ENCODE measurements at regions of chr18 and their contacts with region 1.

Region 1: DNA sequence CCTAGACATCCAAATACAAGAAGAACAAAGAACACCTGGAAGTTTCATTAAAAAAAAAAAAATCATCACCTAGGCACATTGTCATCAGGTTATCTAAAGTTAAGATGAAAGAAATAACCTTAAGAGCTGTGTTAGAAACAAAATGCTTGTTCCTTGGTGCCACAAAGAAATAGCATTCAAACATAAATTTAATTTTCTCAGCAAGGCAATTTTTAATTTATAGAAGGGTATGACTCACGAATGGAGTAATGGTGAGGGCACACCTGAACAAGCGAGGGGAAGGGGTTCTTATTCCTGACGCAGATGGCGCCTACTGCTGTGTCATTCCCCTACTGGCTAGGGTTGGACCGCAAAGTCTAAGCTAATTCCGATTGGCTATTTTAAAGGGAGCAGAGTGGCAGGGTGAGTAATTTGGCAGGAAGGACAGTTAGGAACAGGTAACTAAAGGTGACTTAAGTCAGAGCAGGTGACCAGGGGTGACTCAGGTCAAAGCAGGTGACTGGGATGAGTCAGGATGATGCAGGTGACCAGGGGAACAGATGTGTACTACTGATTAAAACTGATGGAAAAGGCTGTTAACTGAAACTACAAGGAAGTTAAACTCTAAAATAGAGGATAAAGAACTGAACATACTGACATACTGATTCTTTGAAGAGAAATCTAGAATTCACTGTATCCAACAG is 30.0 kb upstream of the TWSG1 start:
- DNase-seq: no peak
- H3K4me3 ChIP-seq: no peak overlapping the region
- H3K27ac ChIP-seq: no peak overlapping the region
- H3K4me1 ChIP-seq: no peaks in the 10 kb centered on the region
- CTCF ChIP-seq: no peak

Region 2: GRCh38 chr18:8816816-8817215 is 487.7 kb before region 1 on chr18:
- CTCF ChIA-PET with region 1: no interaction called
- POLR2A ChIA-PET with region 1: no interaction called
- intact Hi-C with region 1: no loop called
- DNase-seq: no peak
- H3K4me3 ChIP-seq: no peak overlapping the region
- H3K27ac ChIP-seq: no peak overlapping the region
- H3K4me1 ChIP-seq: no peaks in the 10 kb centered on the region
- CTCF ChIP-seq: no peak

Region 3: GRCh38 chr18:9334329-9334972 is 29.9 kb after region 1 on chr18 and contains the start of gene TWSG1:
- CTCF ChIA-PET with region 1: no interaction called
- POLR2A ChIA-PET with region 1: no interaction called
- intact Hi-C with region 1: no loop called
- DNase-seq: peak; percentile 96
- H3K4me3 ChIP-seq: peak within 1 kb of the TSS; percentile 96
- H3K27ac ChIP-seq: no peak within 1 kb of the TSS
- H3K4me1 ChIP-seq: peaks cover 8% of the 10 kb centered on the region
- CTCF ChIP-seq: peak; percentile 32; the same call in 1 of the 2 replicates
- total RNA-seq, gene TWSG1: 7.4 and 7.5 TPM in 2 replicates

Region 4: DNA sequence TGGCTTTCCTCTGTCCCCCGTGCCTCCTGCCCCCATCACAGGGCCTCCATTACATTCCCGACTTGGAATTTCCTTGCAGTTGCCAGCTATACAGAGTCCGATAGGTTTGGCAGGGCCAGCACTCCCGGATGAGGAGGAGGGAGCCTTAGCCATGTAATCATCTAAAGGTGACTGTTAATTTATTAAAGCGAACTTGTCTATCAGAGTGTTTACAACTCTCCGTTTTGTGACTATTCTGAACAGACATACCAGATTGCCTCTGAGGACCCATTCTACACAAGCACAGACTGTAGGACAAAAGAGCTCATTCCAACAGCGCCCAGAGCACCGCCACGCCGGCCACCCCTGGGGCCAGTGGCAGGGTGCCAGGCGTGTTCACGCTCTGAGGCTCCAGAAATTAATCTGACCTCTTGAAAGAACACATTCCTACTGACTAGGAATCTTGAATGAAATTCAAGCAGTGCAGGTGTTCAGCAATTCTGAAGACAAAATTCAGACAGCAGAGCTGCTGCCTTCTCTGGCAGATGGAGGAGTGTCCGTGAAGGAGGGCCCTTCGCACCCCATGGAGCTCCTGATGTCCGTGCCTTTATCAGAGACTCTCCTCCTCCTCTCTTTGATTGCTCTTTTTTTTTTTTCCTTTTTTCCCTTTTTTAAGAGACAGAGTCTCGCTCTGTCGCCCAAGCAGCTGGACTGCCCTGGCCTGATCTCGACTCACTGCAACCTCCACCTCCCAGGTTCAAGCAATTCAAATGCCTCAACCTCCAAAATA is 112.7 kb after region 1 on chr18:
- CTCF ChIA-PET with region 1: no interaction called
- POLR2A ChIA-PET with region 1: no interaction called
- intact Hi-C with region 1: loop called (anchors 10 kb)
- DNase-seq: no peak
- H3K4me3 ChIP-seq: no peak overlapping the region
- H3K27ac ChIP-seq: no peak overlapping the region
- H3K4me1 ChIP-seq: no peaks in the 10 kb centered on the region
- CTCF ChIP-seq: no peak

Region 5: DNA sequence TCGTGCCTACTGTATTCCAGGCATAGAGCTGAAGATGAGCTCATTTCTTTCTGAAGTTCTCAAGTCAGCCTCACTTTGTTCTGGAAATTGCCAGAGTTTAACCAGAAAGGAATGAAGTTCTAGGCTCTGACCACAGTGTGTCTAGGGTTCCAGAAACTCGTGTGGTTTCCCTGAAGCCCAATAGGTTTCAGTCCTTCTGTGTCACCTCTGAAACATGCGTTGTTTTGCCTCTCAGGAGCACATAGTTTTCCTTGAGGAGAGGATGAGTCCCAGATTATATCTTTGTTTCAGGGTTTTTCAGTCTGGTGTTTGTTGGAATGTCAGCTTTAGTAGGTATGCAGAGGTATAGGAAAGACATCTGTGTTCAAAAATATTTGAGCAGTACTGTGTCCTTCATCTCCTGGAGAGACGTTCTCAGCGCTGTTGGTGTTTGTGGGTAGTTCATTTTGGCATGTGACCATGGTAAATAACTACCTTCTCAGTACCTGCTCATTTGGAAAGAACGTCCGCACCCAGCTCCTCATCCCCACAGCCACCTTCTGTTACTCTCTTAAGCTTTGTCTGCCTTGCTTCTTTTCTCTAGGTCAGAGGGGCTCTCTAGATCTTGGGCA is 227.4 kb after region 1 on chr18:
- CTCF ChIA-PET with region 1: no interaction called
- POLR2A ChIA-PET with region 1: no interaction called
- intact Hi-C with region 1: no loop called
- DNase-seq: no peak
- H3K4me3 ChIP-seq: no peak overlapping the region
- H3K27ac ChIP-seq: no peak overlapping the region
- H3K4me1 ChIP-seq: no peaks in the 10 kb centered on the region
- CTCF ChIP-seq: no peak